ENCODE measurements at regions of chr6 and their contacts with region 1.

Region 1: GRCh38 chr6:157946865-157947532 is 34.7 kb upstream of the SYNJ2 start:
- DNase-seq: peak in 2 of 4 experiments; percentile 59 to 64
- ATAC-seq: peak; percentile 92
- H3K4me3 ChIP-seq: no peak overlapping the region
- H3K27ac ChIP-seq: no peak overlapping the region
- H3K4me1 ChIP-seq: peaks cover 0 to 6% of the 10 kb centered on the region in 2 experiments; a peak in 3 of 5 replicates
- H3K27me3 ChIP-seq: 0 out of 5 replicates have a peak, but pooled peaks cover 2 to 4% of the 10 kb centered on the region in 2 experiments
- CTCF ChIP-seq: peak; percentile 73 to 84 (median 78)
- EP300 ChIP-seq: no peak
- POLR2A ChIP-seq: peak; percentile 54
- RAD21 ChIP-seq: peak; percentile 80 to 90

Region 2: DNA sequence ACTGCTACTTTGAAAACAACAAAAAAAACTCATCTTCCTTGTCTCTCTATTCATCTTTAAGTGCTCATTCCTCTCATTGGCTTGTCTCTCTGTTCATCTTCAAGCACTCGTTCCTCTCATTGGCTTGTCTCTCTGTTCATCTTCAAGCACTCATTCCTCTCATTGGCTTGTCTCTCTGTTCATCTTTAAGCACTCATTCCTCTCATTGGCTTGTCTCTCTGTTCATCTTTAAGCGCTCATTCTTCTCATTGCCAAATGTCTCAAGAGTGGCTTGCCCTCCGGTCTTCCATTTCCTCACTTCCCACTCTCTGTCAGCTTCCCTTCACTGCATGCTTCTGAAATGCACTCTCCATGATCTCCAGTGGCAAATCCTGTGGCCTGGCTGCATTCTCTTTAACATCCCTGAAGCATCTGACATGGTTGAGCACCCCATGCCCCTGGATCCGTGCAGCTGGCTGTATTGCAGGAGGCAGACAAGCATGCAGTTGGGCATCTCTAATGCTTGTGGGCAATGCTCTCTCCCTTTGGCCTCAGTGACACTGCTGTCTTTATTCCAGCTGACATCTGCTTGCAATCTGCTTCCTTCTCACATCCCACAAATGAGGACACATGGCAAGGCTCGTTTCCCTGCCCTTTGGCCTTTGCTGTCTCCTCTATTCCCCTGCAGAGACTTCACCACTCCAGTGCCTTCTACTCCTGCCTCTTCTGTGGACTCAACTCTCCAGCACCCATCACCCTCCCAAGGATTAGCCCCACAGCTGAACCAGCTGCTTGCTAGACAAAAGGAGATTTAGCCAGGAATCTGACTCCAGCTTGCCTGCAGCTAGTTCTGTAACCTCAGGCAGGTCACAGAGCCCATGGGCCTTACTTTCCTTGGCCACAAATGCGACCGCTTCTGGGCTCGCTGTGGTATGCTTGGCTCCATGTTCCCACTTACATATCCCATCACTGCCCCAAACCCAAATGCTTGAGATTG is 267.1 kb before region 1 on chr6:
- CTCF ChIA-PET with region 1: no interaction called
- POLR2A ChIA-PET with region 1: no interaction called
- in situ Hi-C with region 1: no loop called
- intact Hi-C with region 1: loop called (anchors 5 kb)
- DNase-seq: no peak
- ATAC-seq: no peak
- H3K4me3 ChIP-seq: no peak overlapping the region
- H3K27ac ChIP-seq: no peak overlapping the region
- H3K4me1 ChIP-seq: peaks cover 0 to 6% of the 10 kb centered on the region in 2 experiments; a peak in 2 of 5 replicates
- H3K27me3 ChIP-seq: no peaks in the 10 kb centered on the region
- CTCF ChIP-seq: no peak
- EP300 ChIP-seq: no peak
- POLR2A ChIP-seq: no peak
- RAD21 ChIP-seq: no peak

Region 3: GRCh38 chr6:157717340-157717741 is 229.7 kb before region 1 on chr6:
- CTCF ChIA-PET with region 1: no interaction called
- POLR2A ChIA-PET with region 1: no interaction called
- in situ Hi-C with region 1: no loop called
- intact Hi-C with region 1: no loop called
- DNase-seq: peak in 2 of 4 experiments; percentile 32 to 42
- ATAC-seq: peak; percentile 70
- H3K4me3 ChIP-seq: no peak overlapping the region
- H3K27ac ChIP-seq: no peak overlapping the region
- H3K4me1 ChIP-seq: peaks cover 6 to 8% of the 10 kb centered on the region in 2 experiments; a peak in 2 of 5 replicates
- H3K27me3 ChIP-seq: peaks cover 9 to 10% of the 10 kb centered on the region in 2 experiments; a peak in 4 of 5 replicates
- CTCF ChIP-seq: no peak
- EP300 ChIP-seq: no peak
- POLR2A ChIP-seq: no peak
- RAD21 ChIP-seq: no peak

Region 4: DNA sequence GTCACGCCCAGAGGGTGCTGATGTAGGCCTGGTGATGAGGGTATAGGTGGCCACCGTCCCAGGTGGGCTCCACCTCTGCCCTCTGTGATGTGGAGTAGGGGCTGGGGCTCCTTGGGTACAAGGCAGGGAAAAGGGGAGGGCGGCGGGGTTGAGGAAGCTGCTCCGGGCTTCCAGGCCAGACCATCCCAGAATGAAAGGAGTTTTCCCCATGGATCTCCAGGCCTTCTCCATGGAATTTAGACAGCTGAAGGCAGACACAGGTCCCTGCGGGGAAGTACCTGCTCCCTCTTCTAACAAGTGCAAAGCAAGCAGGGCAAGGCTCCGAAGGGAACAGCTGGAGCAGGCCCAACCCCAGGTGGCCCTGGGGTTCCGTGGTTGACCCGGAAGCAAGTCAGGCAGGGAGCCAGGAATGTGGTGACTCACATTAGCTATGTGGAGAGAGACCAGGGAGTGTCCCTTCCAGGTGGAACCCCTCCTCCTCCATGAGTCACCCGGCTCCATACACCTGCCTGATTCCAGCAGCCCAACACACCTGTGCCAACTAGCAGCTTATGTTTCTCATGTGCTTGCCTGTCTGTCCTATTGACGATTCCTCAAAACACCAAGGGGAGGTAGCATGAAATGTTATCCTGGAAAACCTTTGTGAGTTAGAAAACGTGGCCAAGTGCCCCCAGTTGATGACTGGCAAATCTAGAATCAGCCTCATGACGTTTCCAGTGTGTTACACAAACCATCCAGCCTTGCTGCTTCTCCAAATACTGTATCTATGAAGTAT is 183.7 kb before region 1 on chr6:
- CTCF ChIA-PET with region 1: no interaction called
- POLR2A ChIA-PET with region 1: no interaction called
- in situ Hi-C with region 1: no loop called
- intact Hi-C with region 1: loop called (anchors 1 kb)
- DNase-seq: peak; percentile 79 to 94 (median 90)
- ATAC-seq: peak; percentile 68
- H3K4me3 ChIP-seq: no peak overlapping the region
- H3K27ac ChIP-seq: peak overlapping the region; percentile 42; the same call in 2 of the 3 replicates
- H3K4me1 ChIP-seq: peaks cover 32 to 53% of the 10 kb centered on the region in 2 experiments
- H3K27me3 ChIP-seq: no peaks in the 10 kb centered on the region
- CTCF ChIP-seq: no peak
- EP300 ChIP-seq: peak; percentile 56
- POLR2A ChIP-seq: no peak
- RAD21 ChIP-seq: peak in 1 of 2 experiments; percentile 16; a peak in 1 of 4 replicates

Region 5: GRCh38 chr6:158072083-158072721 is 125.2 kb after region 1 on chr6:
- CTCF ChIA-PET with region 1: no interaction called
- POLR2A ChIA-PET with region 1: no interaction called
- in situ Hi-C with region 1: no loop called
- intact Hi-C with region 1: loop called (anchors 5 kb)
- DNase-seq: peak; percentile 84 to 87 (median 86)
- ATAC-seq: peak; percentile 95
- H3K4me3 ChIP-seq: no peak overlapping the region
- H3K27ac ChIP-seq: no peak overlapping the region; the same call in 2 of the 3 replicates
- H3K4me1 ChIP-seq: peaks cover 4 to 15% of the 10 kb centered on the region in 2 experiments; a peak in 4 of 5 replicates
- H3K27me3 ChIP-seq: no peaks in the 10 kb centered on the region
- CTCF ChIP-seq: peak; percentile 86 to 98 (median 96)
- EP300 ChIP-seq: peak; percentile 48; the same call in 1 of the 2 replicates
- POLR2A ChIP-seq: no peak
- RAD21 ChIP-seq: peak; percentile 96 to 98

Region 6: DNA sequence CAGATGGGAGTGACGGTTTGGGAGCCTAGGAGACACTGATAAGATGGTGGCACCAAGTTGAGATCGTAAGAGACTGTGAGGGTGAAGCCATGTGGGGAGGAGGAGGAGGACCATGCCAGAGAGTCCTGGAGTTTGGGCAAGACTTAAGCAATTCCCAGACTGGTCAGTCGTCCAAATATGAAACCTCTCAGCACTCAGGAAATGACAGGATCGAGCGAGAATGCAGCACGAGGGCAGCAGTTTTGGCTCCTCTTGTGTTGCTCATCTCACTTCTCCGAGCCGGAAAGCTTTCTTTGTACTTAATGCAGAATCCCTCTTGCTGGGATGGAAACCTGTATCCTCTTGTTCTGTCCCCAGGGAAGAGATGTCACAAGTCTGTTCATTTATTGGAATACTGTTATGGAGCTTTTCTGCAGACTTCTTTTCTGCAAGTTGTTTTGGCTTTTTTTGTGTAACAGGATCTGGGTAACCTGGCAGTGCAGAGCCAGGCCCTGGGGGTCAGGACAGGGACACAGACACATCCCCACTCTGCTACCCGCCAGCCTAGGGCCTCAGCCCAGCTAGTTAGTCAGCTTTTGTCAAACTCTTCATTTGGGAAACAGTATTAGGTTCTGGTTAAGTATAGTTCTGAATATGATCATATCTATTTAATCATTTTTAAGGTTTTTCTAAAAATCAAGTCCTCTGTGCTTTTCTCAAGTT is 1256.5 kb after region 1 on chr6:
- CTCF ChIA-PET with region 1: no interaction called
- POLR2A ChIA-PET with region 1: no interaction called
- in situ Hi-C with region 1: no loop called
- intact Hi-C with region 1: no loop called
- DNase-seq: no peak
- ATAC-seq: no peak
- H3K4me3 ChIP-seq: no peak overlapping the region
- H3K27ac ChIP-seq: no peak overlapping the region
- H3K4me1 ChIP-seq: no peaks in the 10 kb centered on the region
- H3K27me3 ChIP-seq: peaks cover 0 to 38% of the 10 kb centered on the region in 2 experiments; a peak in 3 of 5 replicates
- CTCF ChIP-seq: no peak
- EP300 ChIP-seq: no peak
- POLR2A ChIP-seq: no peak
- RAD21 ChIP-seq: no peak

Measured in K562 (cell line).